Activated CD4-positive, alpha-beta T cell treated with anti-CD3 and anti-CD28 coated beads, Interleukin-2, amount 10 ng/mL, durations not matched to agents 7 days and 5 days (primary cell): ENCODE measurements at regions of chr2 and their contacts with region 1.

Region 1: DNA sequence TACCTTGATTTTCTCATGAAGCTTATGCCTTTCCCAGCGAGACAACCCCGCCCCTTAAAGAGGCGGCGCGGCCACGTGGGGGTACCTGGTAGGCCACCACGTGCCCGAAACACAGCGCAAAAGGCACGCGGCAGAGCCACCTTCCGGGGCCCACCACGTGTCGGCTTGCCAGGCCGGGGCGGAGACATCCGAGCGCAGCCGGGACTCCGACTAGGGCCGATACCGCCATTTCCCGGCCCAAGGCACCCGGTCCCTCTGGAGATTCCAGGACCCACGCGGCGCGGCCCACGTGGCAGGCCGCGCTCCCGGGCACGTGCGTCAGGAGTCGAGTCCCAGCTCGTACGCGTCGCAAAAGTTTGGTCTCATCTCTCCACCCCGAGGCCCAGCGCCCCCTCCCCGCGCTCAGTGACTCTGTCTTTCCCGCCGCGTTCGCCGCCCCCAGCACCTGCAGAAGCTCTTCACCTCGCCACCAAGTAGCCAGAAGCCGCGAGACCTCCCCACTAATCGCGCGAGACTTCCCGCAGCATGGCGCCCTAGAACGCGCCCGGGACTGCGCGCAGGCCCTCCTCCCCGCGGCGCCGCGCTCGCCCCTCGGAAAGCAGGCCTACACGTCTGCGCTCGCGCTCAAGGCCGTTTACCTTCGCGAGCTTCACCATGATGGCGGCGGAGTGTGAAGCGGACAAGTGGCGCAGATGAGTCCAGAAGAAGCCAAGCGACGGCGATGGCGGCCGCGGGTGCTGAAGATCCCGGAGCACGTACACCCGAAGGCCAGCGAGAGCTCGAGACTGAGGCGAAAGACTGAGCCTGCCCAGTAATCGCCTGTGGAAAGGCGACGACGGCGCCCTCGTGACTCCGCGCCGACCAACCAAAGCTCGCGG is at the start of gene NCL:
- DNase-seq: peak; percentile 90
- H3K4me3 Mint-ChIP-seq: peak within 1 kb of the TSS; percentile 95
- H3K27ac Mint-ChIP-seq: peak within 1 kb of the TSS; percentile 100
- H3K4me1 Mint-ChIP-seq: peaks cover 52% of the 10 kb centered on the region
- H3K27me3 Mint-ChIP-seq: no peaks in the 10 kb centered on the region
- total RNA-seq, gene NCL: 542 to 599 TPM

Region 2: GRCh38 chr2:231452799-231453508 is 11.0 kb before region 1 on chr2:
- CTCF ChIA-PET with region 1: interaction called, 13 read pairs
- POLR2A ChIA-PET with region 1: interaction called, 3 read pairs
- DNase-seq: no peak
- H3K4me3 Mint-ChIP-seq: no peak overlapping the region
- H3K27ac Mint-ChIP-seq: peak overlapping the region; percentile 61
- H3K4me1 Mint-ChIP-seq: peaks cover 25% of the 10 kb centered on the region
- H3K27me3 Mint-ChIP-seq: no peaks in the 10 kb centered on the region